Activated CD4-positive, alpha-beta T cell treated with anti-CD3 and anti-CD28 coated beads, Interleukin-2, amount 10 ng/mL, durations not matched to agents 7 days and 5 days (primary cell): ENCODE measurements at regions of chr2 and their contacts with region 1.

Region 1: GRCh38 chr2:202270487-202270886 is 4.9 kb downstream of the NOP58 start:
- DNase-seq: no peak
- H3K4me3 Mint-ChIP-seq: peak overlapping the region; percentile 46
- H3K27ac Mint-ChIP-seq: peak overlapping the region; percentile 80
- H3K4me1 Mint-ChIP-seq: peaks cover 29% of the 10 kb centered on the region
- H3K27me3 Mint-ChIP-seq: no peaks in the 10 kb centered on the region

Region 2: DNA sequence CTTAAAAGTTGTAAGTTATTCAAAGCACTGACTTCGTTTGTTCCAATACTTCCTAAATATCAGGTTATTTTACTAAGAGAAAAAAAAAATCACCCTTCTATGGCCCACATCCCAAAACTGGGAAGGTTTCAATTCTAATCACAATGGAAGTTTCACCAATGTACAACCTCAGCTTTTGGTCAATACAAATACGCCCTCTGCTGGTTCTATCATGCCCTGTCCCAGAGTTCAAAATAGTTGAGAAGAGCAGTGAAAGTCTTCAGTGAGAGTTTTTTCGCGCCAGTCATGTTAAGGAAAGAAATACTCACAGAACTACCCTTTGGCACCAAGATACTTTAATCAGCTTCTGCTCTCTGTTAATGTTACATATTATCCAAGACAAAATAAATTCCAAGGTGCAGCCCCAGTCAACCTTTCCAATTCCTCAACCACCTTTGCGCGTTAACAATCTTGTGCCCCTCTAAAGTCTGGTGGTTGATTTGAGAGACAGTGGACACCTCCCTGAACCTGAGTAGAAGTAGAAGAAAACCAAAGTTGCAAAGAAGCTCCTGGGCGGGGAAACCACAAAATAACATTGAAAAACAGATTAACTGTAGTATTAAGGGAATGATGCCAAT is 92.0 kb before region 1 on chr2:
- CTCF ChIA-PET with region 1: interaction called, 3 read pairs
- POLR2A ChIA-PET with region 1: interaction called, 10 read pairs
- DNase-seq: peak; percentile 64
- H3K4me3 Mint-ChIP-seq: no peak overlapping the region
- H3K27ac Mint-ChIP-seq: no peak overlapping the region
- H3K4me1 Mint-ChIP-seq: no peaks in the 10 kb centered on the region
- H3K27me3 Mint-ChIP-seq: peaks cover 2% of the 10 kb centered on the region

Region 3: GRCh38 chr2:202317080-202317857 is 46.8 kb after region 1 on chr2:
- CTCF ChIA-PET with region 1: no interaction called
- POLR2A ChIA-PET with region 1: no interaction called
- DNase-seq: no peak
- H3K4me3 Mint-ChIP-seq: no peak overlapping the region
- H3K27ac Mint-ChIP-seq: no peak overlapping the region
- H3K4me1 Mint-ChIP-seq: no peaks in the 10 kb centered on the region
- H3K27me3 Mint-ChIP-seq: no peaks in the 10 kb centered on the region